ENCODE measurements at regions of chr4 and their contacts with region 1.

Region 1: DNA sequence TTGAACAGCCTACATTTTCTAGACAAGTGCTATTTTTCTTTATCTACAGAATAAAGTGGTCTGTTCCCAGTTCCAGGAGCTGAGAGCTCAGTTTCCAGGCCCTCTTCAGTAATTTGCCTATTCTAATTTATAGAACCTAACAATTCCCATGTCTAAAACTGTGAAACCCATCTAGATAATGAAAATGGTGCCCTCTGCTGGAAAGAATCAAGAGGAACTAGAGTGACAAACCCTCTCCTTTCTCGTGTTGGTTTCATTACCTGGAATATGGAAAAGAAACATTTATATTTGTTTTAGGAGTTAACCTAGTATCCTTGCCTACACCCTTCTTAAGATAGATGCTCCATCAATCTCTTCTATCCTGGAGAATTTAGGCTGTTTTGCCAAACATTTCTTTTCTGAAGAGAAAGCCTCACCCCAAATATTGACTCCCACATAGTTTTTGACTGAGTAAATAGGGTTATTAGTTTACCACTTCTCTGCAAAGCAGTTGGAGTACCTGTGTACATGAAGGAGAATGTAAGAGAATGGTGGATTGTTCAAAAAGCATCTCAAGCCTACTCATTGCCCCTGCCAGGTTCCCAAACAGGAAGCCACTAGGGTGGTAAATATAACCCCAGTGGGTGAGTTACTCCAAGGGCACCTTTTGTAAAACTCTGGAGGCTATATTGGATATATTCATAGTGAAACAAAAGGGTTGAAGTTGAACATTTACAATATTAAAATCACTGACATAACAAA is 121.6 kb downstream of the RASL11B start:
- DNase-seq: no peak
- ATAC-seq: peak; percentile 70 to 79
- H3K4me3 ChIP-seq: no peak overlapping the region
- H3K27ac ChIP-seq: no peak overlapping the region
- H3K4me1 ChIP-seq: peaks cover 0 to 6% of the 10 kb centered on the region in 2 donors
- H3K27me3 ChIP-seq: no peaks in the 10 kb centered on the region
- CTCF ChIP-seq: peak; percentile 40 to 77 (median 56)
- POLR2A ChIP-seq: no peak

Region 2: GRCh38 chr4:52103319-52103718 is 880.4 kb before region 1 on chr4:
- in situ Hi-C with region 1: loop called in 1 of 4 experiments (anchors 25 kb)
- intact Hi-C with region 1: no loop called
- DNase-seq: no peak
- ATAC-seq: no peak
- H3K4me3 ChIP-seq: no peak overlapping the region
- H3K27ac ChIP-seq: no peak overlapping the region
- H3K4me1 ChIP-seq: peaks cover 7 to 17% of the 10 kb centered on the region in 2 donors
- H3K27me3 ChIP-seq: no peaks in the 10 kb centered on the region
- CTCF ChIP-seq: no peak
- POLR2A ChIP-seq: no peak

Region 3: DNA sequence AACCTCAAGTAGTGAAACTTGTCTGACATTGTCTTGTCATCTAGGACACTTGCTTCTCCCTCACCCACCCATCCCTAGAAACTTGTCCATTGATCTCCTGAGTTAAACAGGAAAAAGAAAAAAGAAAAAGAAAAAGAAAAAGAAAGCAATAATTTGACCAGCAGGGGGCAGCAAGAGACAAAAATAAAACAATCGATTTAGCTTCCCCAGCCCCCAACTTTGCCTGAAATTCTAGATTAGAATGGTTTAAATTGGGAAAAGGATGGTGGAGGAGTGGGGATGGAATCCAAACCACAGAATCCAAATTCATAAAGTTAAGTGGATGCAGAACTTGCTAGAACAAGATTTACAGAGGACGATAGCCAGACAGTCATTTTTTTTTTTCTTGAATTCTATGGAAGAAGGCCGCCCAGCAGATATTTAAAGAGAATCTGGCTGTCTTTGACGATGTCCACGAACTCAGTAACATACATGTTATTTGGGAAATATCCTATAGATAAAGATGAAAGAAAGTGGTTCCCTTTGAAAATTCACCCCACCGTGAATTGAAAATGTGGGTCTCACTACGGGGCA is 607.5 kb before region 1 on chr4:
- in situ Hi-C with region 1: loop called (anchors 10 kb)
- intact Hi-C with region 1: loop called (anchors 2 kb)
- DNase-seq: no peak
- ATAC-seq: no peak
- H3K4me3 ChIP-seq: no peak overlapping the region
- H3K27ac ChIP-seq: no peak overlapping the region
- H3K4me1 ChIP-seq: no peaks in the 10 kb centered on the region
- H3K27me3 ChIP-seq: no peaks in the 10 kb centered on the region
- CTCF ChIP-seq: peak; percentile 32 to 63 (median 42)
- POLR2A ChIP-seq: no peak

Region 4: GRCh38 chr4:52588097-52588782 is 395.5 kb before region 1 on chr4:
- in situ Hi-C with region 1: no loop called
- intact Hi-C with region 1: loop called (anchors 1 kb)
- DNase-seq: peak in 1 of 2 donors; percentile 30
- ATAC-seq: peak in 1 of 2 donors; percentile 42
- H3K4me3 ChIP-seq: no peak overlapping the region
- H3K27ac ChIP-seq: no peak overlapping the region
- H3K4me1 ChIP-seq: no peaks in the 10 kb centered on the region
- H3K27me3 ChIP-seq: no peaks in the 10 kb centered on the region
- CTCF ChIP-seq: peak; percentile 18 to 63 (median 49)
- POLR2A ChIP-seq: no peak

Region 5: DNA sequence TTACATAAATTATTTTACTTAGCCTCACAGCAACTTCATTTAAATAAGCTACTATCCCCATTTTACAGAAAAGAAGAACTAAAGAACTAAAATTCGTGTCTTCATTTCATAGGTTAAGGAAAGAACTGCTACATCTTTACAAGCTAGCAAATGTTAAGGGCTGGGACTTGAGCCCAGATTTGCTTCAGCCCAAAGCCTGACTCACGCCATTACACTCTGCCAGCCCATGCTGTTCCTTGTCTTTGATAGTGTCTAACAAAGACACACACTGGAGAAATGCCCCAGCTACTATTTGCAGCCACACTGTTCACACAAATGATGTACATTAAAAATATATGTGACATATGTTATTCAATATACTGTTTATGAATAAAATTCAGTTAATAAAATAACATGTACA is 203.5 kb before region 1 on chr4:
- in situ Hi-C with region 1: loop called in 1 of 4 experiments (anchors 25 kb)
- intact Hi-C with region 1: no loop called
- DNase-seq: no peak
- ATAC-seq: no peak
- H3K4me3 ChIP-seq: no peak overlapping the region
- H3K27ac ChIP-seq: no peak overlapping the region
- H3K4me1 ChIP-seq: no peaks in the 10 kb centered on the region
- H3K27me3 ChIP-seq: no peaks in the 10 kb centered on the region
- CTCF ChIP-seq: no peak
- POLR2A ChIP-seq: no peak